ENCODE measurements at regions of chr17 and their contacts with region 1.

Region 1: GRCh38 chr17:75927286-75927922 is 13.4 kb downstream of the FBF1 start:
- DNase-seq: no peak
- ATAC-seq: peak; percentile 59
- H3K4me3 ChIP-seq: no peak overlapping the region
- H3K27ac ChIP-seq: no peak overlapping the region
- H3K4me1 ChIP-seq: no peaks in the 10 kb centered on the region
- H3K27me3 ChIP-seq: no peaks in the 10 kb centered on the region
- CTCF ChIP-seq: peak; percentile 9 to 40 (median 35); a peak in 3 of 6 replicates
- EP300 ChIP-seq: no peak
- POLR2A ChIP-seq: no peak
- RAD21 ChIP-seq: no peak

Region 2: GRCh38 chr17:76296186-76296585 is 368.8 kb after region 1 on chr17:
- CTCF ChIA-PET with region 1: no interaction called
- POLR2A ChIA-PET with region 1: no interaction called
- RAD21 ChIA-PET with region 1: no interaction called
- SMC1A ChIA-PET with region 1: no interaction called
- in situ Hi-C with region 1: loop called (anchors 5 kb)
- intact Hi-C with region 1: no loop called
- DNase-seq: no peak
- ATAC-seq: no peak
- H3K4me3 ChIP-seq: no peak overlapping the region
- H3K27ac ChIP-seq: no peak overlapping the region
- H3K4me1 ChIP-seq: no peaks in the 10 kb centered on the region
- H3K27me3 ChIP-seq: no peaks in the 10 kb centered on the region
- CTCF ChIP-seq: no peak
- EP300 ChIP-seq: no peak
- POLR2A ChIP-seq: no peak
- RAD21 ChIP-seq: no peak

Region 3: DNA sequence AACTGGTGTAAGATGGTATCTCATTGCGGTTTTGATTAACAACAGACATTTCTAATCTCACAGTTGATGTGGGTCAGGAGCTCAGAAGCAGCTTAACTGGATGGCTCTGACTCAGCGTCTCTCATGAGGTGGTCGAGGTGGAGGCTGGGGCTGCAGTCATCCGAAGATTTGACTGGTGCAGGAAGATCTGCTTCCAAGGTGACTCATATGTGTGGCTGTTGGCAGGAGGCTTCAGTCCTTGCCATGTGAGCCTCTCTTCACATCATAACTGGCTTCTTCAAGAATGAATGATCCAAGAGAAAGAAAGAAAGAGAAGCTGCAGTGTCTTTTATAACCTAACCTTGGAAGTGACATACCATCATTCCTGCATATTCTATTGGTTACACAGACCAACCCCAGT is 1589.5 kb after region 1 on chr17:
- CTCF ChIA-PET with region 1: no interaction called
- POLR2A ChIA-PET with region 1: no interaction called
- RAD21 ChIA-PET with region 1: no interaction called
- SMC1A ChIA-PET with region 1: no interaction called
- in situ Hi-C with region 1: no loop called
- intact Hi-C with region 1: no loop called
- DNase-seq: no peak
- ATAC-seq: no peak
- H3K4me3 ChIP-seq: no peak overlapping the region
- H3K27ac ChIP-seq: no peak overlapping the region
- H3K4me1 ChIP-seq: no peaks in the 10 kb centered on the region
- H3K27me3 ChIP-seq: no peaks in the 10 kb centered on the region; a peak in 1 of 4 replicates
- CTCF ChIP-seq: no peak
- EP300 ChIP-seq: no peak
- POLR2A ChIP-seq: no peak
- RAD21 ChIP-seq: no peak

Measured in GM12878 (cell line).